HEK293T (cell line): ENCODE measurements at regions of chr1 and their contacts with region 1.

Region 1: GRCh38 chr1:208919371-208919770 is 664.1 kb upstream of the CAMK1G start:
- DNase-seq: no peak

Region 2: GRCh38 chr1:208291923-208292711 is 627.3 kb before region 1 on chr1:
- CTCF ChIA-PET with region 1: interaction called, 10 read pairs
- POLR2A ChIA-PET with region 1: no interaction called
- DNase-seq: no peak

Region 3: GRCh38 chr1:208942394-208943130 is 23.2 kb after region 1 on chr1:
- CTCF ChIA-PET with region 1: no interaction called
- POLR2A ChIA-PET with region 1: no interaction called
- DNase-seq: no peak